CD8-positive, alpha-beta T cell (primary cell): ENCODE measurements at regions of chr10 and their contacts with region 1.

Region 1: DNA sequence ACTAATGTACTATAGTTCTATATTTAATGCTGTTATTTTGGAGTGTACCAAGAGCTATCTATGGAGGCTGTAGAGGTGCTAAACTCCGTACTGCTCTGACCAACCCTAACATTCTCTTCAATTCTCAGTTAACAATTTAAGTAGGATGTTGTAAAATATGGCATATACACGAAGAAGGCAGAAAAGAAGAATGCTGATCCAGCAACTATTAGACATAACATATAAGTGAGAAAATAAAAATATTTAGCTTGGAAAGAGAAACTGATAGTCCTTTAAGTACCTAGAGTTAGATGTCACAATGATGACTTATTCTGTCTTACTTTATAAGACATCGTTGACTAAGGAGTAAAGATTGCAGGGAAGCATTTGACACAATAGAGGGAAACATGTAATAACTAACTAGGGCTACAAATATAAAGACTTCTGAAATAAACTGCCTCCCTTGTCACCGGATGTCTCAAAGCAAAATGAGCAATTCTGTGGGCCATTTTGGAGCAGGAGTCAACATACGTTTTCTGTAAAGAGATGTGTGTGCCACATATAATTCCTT is 159.5 kb downstream of the CPEB3 start:
- DNase-seq: no peak
- ATAC-seq: no peak
- H3K4me3 ChIP-seq: no peak overlapping the region
- H3K4me3 Mint-ChIP-seq: no peak overlapping the region
- H3K27ac ChIP-seq: no peak overlapping the region
- H3K27ac Mint-ChIP-seq: no peak overlapping the region
- H3K4me1 ChIP-seq: no peaks in the 10 kb centered on the region
- H3K4me1 Mint-ChIP-seq: no peaks in the 10 kb centered on the region
- H3K27me3 ChIP-seq: no peaks in the 10 kb centered on the region
- H3K27me3 Mint-ChIP-seq: no peaks in the 10 kb centered on the region
- CTCF ChIP-seq: no peak

Region 2: DNA sequence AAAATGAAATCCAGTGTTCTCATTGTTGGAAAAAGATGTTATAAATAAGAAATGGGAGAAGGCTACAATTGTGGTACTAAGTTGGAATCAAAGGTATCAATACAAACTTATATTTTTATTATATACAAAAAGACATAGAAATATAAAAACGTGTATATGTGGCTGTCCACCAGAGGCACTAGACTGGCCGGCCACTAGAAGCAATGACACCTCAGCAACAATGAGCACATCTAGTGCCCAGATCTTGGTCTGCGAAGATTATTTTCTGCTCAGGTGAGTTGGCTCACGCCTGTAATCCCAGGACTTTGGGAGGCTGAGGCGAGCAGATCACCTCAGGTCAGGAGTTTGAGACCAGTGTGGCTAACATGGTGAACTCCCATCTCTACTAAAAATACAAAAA is 421.0 kb after region 1 on chr10:
- CTCF ChIA-PET with region 1: no interaction called
- POLR2A ChIA-PET with region 1: no interaction called
- intact Hi-C with region 1: loop called in 1 of 2 experiments (anchors 5 kb)
- DNase-seq: no peak
- ATAC-seq: no peak
- H3K4me3 ChIP-seq: no peak overlapping the region
- H3K4me3 Mint-ChIP-seq: no peak overlapping the region
- H3K27ac ChIP-seq: no peak overlapping the region
- H3K27ac Mint-ChIP-seq: no peak overlapping the region
- H3K4me1 ChIP-seq: no peaks in the 10 kb centered on the region
- H3K4me1 Mint-ChIP-seq: peaks cover 5% of the 10 kb centered on the region
- H3K27me3 ChIP-seq: no peaks in the 10 kb centered on the region
- H3K27me3 Mint-ChIP-seq: no peaks in the 10 kb centered on the region
- CTCF ChIP-seq: no peak